ENCODE measurements at regions of chr15 and their contacts with region 1.

Region 1: DNA sequence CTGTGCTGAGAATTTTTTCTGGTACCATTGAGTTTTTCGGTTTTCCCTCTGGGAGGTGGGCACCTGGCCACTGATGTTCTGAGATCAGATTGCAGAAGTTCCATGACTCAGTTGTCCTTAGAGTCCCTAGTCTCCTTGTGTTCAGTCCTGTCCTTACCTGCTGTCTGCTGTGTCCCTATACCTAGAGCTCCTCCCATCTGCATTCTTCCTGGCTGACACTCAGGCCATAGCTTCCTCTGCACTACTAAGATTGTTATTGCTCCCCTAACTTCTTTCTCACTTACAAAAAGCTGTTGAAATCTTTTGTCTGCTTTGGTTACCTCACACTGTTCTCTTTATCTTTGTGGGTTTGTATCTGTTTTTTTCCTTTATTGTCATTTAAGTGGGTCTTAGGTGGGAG is 13.2 kb downstream of the USP3 start:
- DNase-seq: no peak
- H3K4me3 ChIP-seq: peak overlapping the region in 1 of 4 experiments; percentile 31; a peak in 1 of 8 replicates
- H3K27ac ChIP-seq: no peak overlapping the region
- H3K4me1 ChIP-seq: peaks cover 0 to 11% (median 4%) of the 10 kb centered on the region in 4 experiments; a peak in 3 of 7 replicates
- H3K27me3 ChIP-seq: peaks cover 0 to 2% (median 0%) of the 10 kb centered on the region in 4 experiments; a peak in 1 of 7 replicates
- CTCF ChIP-seq: no peak
- EP300 ChIP-seq: no peak
- POLR2A ChIP-seq: no peak
- RAD21 ChIP-seq: no peak

Region 2: GRCh38 chr15:63212050-63213004 is 305.3 kb before region 1 on chr15:
- CTCF ChIA-PET with region 1: no interaction called
- POLR2A ChIA-PET with region 1: no interaction called
- DNase-seq: no peak
- H3K4me3 ChIP-seq: no peak overlapping the region
- H3K27ac ChIP-seq: no peak overlapping the region
- H3K4me1 ChIP-seq: peaks cover 2 to 11% (median 4%) of the 10 kb centered on the region in 4 experiments; a peak in 6 of 7 replicates
- H3K27me3 ChIP-seq: no peaks in the 10 kb centered on the region
- CTCF ChIP-seq: no peak
- EP300 ChIP-seq: no peak
- POLR2A ChIP-seq: no peak
- RAD21 ChIP-seq: no peak

Region 3: DNA sequence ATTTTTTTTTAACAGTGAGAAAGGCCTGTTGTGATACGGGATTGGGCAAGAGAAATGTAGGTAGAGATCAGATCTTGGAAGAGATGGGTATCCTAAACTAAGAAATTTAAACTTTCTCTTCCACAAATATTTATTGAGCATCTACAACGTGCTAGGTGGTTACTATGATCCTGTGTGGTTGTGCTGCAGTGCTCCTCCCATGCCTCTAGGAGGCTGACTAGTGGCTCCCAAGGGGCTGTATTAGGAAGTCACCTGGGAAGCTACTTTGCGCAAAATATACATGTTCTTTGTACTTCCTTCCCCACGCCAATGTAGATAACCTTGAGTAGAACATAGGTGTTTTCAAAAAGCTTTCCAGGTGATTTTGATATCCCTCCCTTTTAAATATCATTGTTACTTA is 14.0 kb after region 1 on chr15:
- CTCF ChIA-PET with region 1: interaction called, 39 read pairs
- POLR2A ChIA-PET with region 1: interaction called, 4 read pairs
- DNase-seq: no peak
- H3K4me3 ChIP-seq: no peak overlapping the region
- H3K27ac ChIP-seq: no peak overlapping the region
- H3K4me1 ChIP-seq: peaks cover 3 to 11% (median 6%) of the 10 kb centered on the region in 4 experiments; a peak in 6 of 7 replicates
- H3K27me3 ChIP-seq: no peaks in the 10 kb centered on the region
- CTCF ChIP-seq: peak; percentile 51 to 73 (median 69)
- EP300 ChIP-seq: no peak
- POLR2A ChIP-seq: no peak
- RAD21 ChIP-seq: peak; percentile 24 to 56; a peak in 3 of 4 replicates

Measured in H1 (cell line).